Activated naive CD4-positive, alpha-beta T cell treated with anti-CD3 and anti-CD28 coated beads for 36 hours (primary cell): ENCODE measurements at regions of chr11 and their contacts with region 1.

Region 1: DNA sequence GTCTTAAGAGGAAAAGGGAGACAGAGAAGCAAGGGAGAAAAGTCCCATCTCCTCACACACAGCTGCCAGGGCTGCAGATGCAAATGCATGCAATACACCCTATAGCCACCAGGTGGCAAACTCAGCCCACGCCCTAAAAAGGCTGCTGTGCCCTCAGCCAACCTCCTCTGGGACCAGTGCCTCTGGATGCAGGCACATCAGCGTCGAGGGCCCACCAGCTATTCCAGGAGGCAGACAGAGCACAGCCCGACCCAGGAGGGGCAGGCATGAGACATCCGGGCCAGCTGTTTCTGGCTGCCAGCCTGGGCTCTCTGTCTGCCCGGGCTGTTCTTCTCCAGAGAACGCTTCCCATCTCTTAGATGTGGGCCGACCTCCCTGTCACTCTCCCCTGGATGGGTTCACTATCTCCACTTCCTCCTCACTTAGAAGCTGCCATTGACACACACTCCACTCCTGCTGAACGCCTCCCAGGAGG is 39.7 kb downstream of the TPBGL start:
- DNase-seq: peak; percentile 86
- H3K4me3 Mint-ChIP-seq: no peak overlapping the region
- H3K27ac Mint-ChIP-seq: peak overlapping the region; percentile 73
- H3K4me1 Mint-ChIP-seq: peaks cover 38% of the 10 kb centered on the region
- H3K27me3 Mint-ChIP-seq: no peaks in the 10 kb centered on the region

Region 2: GRCh38 chr11:75035911-75036565 is 244.2 kb before region 1 on chr11:
- CTCF ChIA-PET with region 1: no interaction called
- intact Hi-C with region 1: no loop called
- DNase-seq: no peak
- H3K4me3 Mint-ChIP-seq: no peak overlapping the region
- H3K27ac Mint-ChIP-seq: no peak overlapping the region
- H3K4me1 Mint-ChIP-seq: no peaks in the 10 kb centered on the region
- H3K27me3 Mint-ChIP-seq: no peaks in the 10 kb centered on the region

Region 3: DNA sequence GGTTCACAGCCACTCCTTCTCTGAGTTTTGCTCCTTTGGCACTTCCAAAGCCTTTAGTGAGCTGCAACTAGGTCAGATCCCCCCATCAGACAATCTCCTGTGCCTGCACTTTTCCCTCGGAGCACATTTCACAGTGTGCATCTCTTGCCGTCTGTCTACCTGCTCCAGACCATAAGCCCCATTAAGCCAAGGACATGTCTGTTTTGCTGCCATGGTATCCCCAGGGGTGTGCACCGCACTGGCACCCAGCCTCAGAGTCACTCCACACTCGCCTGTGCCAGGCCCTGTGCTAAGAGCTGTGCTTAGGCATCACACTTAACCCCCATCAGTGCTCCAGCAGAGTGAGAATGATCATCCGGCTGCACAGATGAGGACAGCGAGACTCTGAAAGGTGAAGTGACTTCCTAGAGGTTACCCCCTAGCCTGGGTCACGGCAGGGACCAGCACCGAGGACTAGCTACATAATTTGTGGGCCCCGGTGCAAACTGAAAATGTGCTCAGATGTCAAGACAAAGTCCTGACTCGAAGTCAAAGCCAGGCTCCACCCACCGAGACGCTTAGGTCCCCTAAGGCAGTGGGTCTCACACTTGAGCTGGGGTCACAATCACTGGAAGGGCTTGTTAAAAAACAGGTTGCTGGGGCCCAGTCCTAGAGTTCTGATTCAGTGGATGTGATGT is 37.3 kb after region 1 on chr11:
- CTCF ChIA-PET with region 1: no interaction called
- intact Hi-C with region 1: no loop called
- DNase-seq: no peak
- H3K4me3 Mint-ChIP-seq: no peak overlapping the region
- H3K27ac Mint-ChIP-seq: no peak overlapping the region
- H3K4me1 Mint-ChIP-seq: peaks cover 23% of the 10 kb centered on the region
- H3K27me3 Mint-ChIP-seq: no peaks in the 10 kb centered on the region

Region 4: GRCh38 chr11:75342903-75343870 is 62.9 kb after region 1 on chr11:
- CTCF ChIA-PET with region 1: interaction called, 14 read pairs
- intact Hi-C with region 1: no loop called
- DNase-seq: no peak
- H3K4me3 Mint-ChIP-seq: no peak overlapping the region
- H3K27ac Mint-ChIP-seq: peak overlapping the region; percentile 46
- H3K4me1 Mint-ChIP-seq: peaks cover 96% of the 10 kb centered on the region
- H3K27me3 Mint-ChIP-seq: no peaks in the 10 kb centered on the region

Region 5: GRCh38 chr11:75351791-75352587 is 71.7 kb after region 1 on chr11:
- CTCF ChIA-PET with region 1: interaction called, 9 read pairs
- intact Hi-C with region 1: loop called (anchors 1 kb)
- DNase-seq: peak; percentile 54
- H3K4me3 Mint-ChIP-seq: peak overlapping the region; percentile 84
- H3K27ac Mint-ChIP-seq: peak overlapping the region; percentile 75
- H3K4me1 Mint-ChIP-seq: peaks cover 55% of the 10 kb centered on the region
- H3K27me3 Mint-ChIP-seq: no peaks in the 10 kb centered on the region

Region 6: DNA sequence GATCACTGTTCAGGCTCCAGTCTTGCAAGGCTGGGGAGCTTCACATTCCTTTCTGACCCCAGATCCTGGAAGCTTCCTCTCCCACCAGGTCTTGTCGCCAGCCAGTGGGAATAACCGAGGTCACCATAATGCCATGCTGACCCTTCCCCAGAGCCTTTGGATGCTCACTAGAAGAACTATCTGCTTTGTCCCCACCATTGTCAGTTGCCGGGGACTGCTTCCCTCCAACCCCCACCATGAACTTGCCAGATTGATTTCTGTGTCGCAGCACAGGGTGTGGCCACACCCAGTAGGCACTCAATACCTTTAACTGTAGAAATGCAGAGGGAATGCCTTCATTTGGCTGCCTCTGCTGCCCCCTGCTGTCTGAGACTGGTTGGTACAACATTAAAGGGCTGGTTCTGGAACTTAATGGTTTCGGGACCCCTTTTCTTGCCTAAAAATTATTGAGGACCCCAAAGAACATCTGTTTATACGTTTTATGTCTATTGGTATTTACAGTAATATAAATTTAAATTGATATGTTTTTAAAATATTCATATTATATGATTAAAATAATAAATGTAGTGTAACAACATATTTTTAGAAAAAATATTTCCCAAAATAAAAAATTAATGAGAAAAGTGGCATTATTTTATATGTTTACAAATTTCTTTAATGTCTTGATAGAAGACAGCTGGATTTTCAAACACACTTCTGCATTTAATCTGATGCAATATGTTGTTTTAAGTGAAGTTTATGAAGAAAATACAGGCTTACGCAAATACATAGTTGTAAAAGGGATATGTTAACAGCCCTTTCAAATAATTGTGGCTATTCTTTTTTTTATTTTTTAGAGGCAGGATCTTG is 252.2 kb after region 1 on chr11:
- CTCF ChIA-PET with region 1: interaction called, 7 read pairs
- intact Hi-C with region 1: loop called (anchors 1 kb)
- DNase-seq: peak; percentile 91
- H3K4me3 Mint-ChIP-seq: no peak overlapping the region
- H3K27ac Mint-ChIP-seq: no peak overlapping the region
- H3K4me1 Mint-ChIP-seq: peaks cover 14% of the 10 kb centered on the region
- H3K27me3 Mint-ChIP-seq: no peaks in the 10 kb centered on the region